ENCODE measurements at regions of chr17 and their contacts with region 1.

Region 1: GRCh38 chr17:68457539-68458259 is 403 bp upstream of the WIPI1 start:
- DNase-seq: peak; percentile 97
- H3K4me3 Mint-ChIP-seq: peak overlapping the region; percentile 96
- H3K27ac Mint-ChIP-seq: peak overlapping the region; percentile 51
- H3K4me1 Mint-ChIP-seq: peaks cover 33% of the 10 kb centered on the region
- H3K27me3 Mint-ChIP-seq: no peaks in the 10 kb centered on the region
- CTCF ChIP-seq: no peak

Region 2: GRCh38 chr17:67974598-67975066 is 483.1 kb before region 1 on chr17:
- CTCF ChIA-PET with region 1: no interaction called
- POLR2A ChIA-PET with region 1: no interaction called
- intact Hi-C with region 1: loop called (anchors 5 kb)
- DNase-seq: no peak
- H3K4me3 Mint-ChIP-seq: no peak overlapping the region
- H3K27ac Mint-ChIP-seq: no peak overlapping the region
- H3K4me1 Mint-ChIP-seq: peaks cover 6% of the 10 kb centered on the region
- H3K27me3 Mint-ChIP-seq: no peaks in the 10 kb centered on the region
- CTCF ChIP-seq: no peak

Region 3: DNA sequence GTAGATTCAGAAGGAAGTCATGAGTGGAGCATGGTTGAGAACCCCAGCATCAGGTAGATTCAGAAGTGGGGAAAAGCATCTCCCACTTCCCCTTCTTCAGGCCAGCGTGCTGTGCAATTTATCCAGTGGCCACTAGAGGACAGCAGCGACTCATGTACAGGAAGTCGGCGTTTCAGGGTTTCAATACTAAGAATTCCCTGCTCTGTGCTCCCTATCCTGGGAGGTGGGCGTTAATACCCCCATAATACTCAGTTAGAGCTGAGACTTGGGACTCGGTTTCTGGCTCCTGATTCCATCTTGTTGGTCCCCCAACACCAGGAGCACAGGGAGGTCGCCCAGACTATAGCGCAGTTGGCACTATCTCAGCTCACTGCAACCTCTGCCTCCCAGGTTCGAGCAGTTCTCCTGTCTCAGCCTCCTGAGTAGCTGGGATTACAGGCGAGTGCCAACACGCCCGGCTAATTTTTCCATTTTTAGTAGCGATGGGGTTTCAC is 285.2 kb before region 1 on chr17:
- CTCF ChIA-PET with region 1: interaction called, 11 read pairs
- POLR2A ChIA-PET with region 1: interaction called, 3 read pairs
- intact Hi-C with region 1: no loop called
- DNase-seq: peak; percentile 67
- H3K4me3 Mint-ChIP-seq: no peak overlapping the region
- H3K27ac Mint-ChIP-seq: no peak overlapping the region
- H3K4me1 Mint-ChIP-seq: no peaks in the 10 kb centered on the region
- H3K27me3 Mint-ChIP-seq: no peaks in the 10 kb centered on the region
- CTCF ChIP-seq: peak; percentile 98

Region 4: GRCh38 chr17:68291844-68292695 is 165.6 kb before region 1 on chr17:
- CTCF ChIA-PET with region 1: no interaction called
- POLR2A ChIA-PET with region 1: interaction called, 14 read pairs
- intact Hi-C with region 1: no loop called
- DNase-seq: peak; percentile 73
- H3K4me3 Mint-ChIP-seq: peak overlapping the region; percentile 74
- H3K27ac Mint-ChIP-seq: no peak overlapping the region
- H3K4me1 Mint-ChIP-seq: no peaks in the 10 kb centered on the region
- H3K27me3 Mint-ChIP-seq: no peaks in the 10 kb centered on the region
- CTCF ChIP-seq: no peak

Region 5: DNA sequence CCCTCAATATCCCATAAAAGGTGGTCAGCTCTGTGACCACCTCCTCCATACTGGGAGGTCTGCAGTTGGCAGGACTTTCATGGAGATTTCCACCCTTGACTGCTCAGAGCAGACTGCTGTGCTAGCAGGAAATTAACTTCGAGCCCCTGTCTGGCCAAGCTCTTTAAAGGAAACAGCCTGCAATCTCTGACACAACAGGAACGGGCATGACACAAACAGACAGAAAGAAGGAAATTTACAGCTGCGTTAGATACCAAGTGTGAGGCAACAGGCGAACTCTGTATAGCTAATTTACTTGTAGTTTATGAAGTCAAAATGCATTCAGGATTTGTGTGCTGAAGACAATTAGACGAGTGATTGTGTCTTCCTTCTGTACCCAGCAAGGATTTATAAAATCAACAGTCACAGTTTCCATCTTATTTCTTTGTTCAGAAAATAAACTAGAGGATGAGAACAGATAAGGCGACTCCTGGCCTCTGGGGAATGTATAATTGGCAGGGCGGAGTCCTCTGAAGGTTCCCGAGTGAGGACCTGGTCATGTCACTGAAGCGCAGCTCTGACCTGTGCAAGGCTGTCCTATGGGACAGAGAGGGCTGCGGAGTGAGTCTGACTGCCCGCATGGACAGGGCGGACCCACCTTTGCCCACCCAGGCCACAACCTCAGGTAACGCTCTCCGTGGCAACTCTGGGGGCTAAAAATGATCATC is 16.5 kb before region 1 on chr17:
- CTCF ChIA-PET with region 1: interaction called, 14 read pairs
- POLR2A ChIA-PET with region 1: interaction called, 28 read pairs
- intact Hi-C with region 1: loop called (anchors 1 kb)
- DNase-seq: no peak
- H3K4me3 Mint-ChIP-seq: no peak overlapping the region
- H3K27ac Mint-ChIP-seq: no peak overlapping the region
- H3K4me1 Mint-ChIP-seq: peaks cover 2% of the 10 kb centered on the region
- H3K27me3 Mint-ChIP-seq: no peaks in the 10 kb centered on the region
- CTCF ChIP-seq: no peak

Region 6: DNA sequence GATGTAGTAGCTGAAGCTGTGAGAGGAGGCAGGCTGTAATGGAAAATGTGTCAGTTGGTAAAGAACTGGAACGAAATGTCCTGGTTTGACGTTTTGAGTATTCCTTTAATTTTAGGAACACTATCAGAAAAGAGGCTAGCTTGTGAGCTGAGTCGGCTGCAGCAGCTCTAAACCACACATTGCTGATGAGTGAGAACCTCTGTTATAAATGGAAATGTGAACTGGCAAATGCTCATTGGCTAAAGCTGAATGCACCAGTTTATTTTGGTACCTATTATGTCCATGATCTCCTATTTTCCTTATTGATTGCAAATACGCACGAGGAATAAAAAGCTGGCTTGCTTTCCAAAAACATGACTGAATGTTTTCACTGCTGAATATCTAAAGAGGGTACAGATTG is 10.6 kb after region 1 on chr17:
- CTCF ChIA-PET with region 1: interaction called, 7 read pairs
- POLR2A ChIA-PET with region 1: interaction called, 19 read pairs
- intact Hi-C with region 1: no loop called
- DNase-seq: no peak
- H3K4me3 Mint-ChIP-seq: no peak overlapping the region
- H3K27ac Mint-ChIP-seq: no peak overlapping the region
- H3K4me1 Mint-ChIP-seq: no peaks in the 10 kb centered on the region
- H3K27me3 Mint-ChIP-seq: peaks cover 28% of the 10 kb centered on the region
- CTCF ChIP-seq: no peak

Measured in MCF 10A (cell line).